ENCODE measurements at regions of chr6 and their contacts with region 1.

Region 1: DNA sequence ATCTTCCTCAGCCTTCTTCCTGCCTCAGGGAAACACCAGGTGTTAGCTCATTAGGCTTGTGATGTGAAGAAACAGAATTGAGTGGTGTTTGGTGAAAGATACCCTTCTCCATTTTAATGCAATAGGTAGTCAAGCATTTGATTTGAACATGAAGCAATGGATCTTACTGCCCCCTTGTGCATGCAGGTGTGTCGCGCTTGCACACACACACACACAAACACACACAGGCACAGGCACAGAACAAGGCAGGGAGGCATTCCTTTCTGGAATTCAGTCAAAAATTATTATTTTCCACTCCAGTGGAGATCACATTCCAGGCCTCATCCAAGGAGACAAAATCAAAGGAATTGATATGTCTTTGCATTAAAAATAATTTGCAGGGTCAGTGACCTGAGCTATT is 667.0 kb upstream of the MARCKS start:
- DNase-seq: no peak
- H3K4me3 ChIP-seq: no peak overlapping the region
- H3K4me3 Mint-ChIP-seq: no peak overlapping the region
- H3K27ac Mint-ChIP-seq: no peak overlapping the region
- H3K4me1 ChIP-seq: peaks cover 22% of the 10 kb centered on the region
- H3K4me1 Mint-ChIP-seq: peaks cover 18% of the 10 kb centered on the region
- H3K27me3 ChIP-seq: no peaks in the 10 kb centered on the region
- H3K27me3 Mint-ChIP-seq: no peaks in the 10 kb centered on the region
- CTCF ChIP-seq: no peak

Region 2: DNA sequence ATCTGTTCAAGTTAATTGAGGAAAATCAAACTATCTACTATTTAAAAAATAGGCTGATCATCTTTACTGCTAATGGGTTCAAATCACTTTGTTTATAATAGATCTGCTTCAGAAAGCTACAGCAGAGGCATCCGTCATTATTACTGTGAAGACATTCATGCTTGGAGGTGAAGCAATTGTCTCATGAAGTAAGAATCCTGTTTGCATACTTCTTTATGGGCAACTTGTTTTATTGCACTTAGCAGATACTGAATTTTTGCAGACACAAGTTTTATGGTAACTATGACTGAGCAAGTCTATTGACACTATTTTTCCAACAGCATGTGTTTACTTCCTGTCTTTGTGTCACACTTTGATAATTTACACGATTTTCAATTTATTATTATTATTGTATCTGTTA is 269.2 kb before region 1 on chr6:
- CTCF ChIA-PET with region 1: no interaction called
- POLR2A ChIA-PET with region 1: no interaction called
- intact Hi-C with region 1: no loop called
- DNase-seq: no peak
- H3K4me3 ChIP-seq: no peak overlapping the region
- H3K4me3 Mint-ChIP-seq: no peak overlapping the region
- H3K27ac Mint-ChIP-seq: no peak overlapping the region
- H3K4me1 ChIP-seq: no peaks in the 10 kb centered on the region
- H3K4me1 Mint-ChIP-seq: no peaks in the 10 kb centered on the region
- H3K27me3 ChIP-seq: no peaks in the 10 kb centered on the region
- H3K27me3 Mint-ChIP-seq: no peaks in the 10 kb centered on the region
- CTCF ChIP-seq: no peak

Region 3: DNA sequence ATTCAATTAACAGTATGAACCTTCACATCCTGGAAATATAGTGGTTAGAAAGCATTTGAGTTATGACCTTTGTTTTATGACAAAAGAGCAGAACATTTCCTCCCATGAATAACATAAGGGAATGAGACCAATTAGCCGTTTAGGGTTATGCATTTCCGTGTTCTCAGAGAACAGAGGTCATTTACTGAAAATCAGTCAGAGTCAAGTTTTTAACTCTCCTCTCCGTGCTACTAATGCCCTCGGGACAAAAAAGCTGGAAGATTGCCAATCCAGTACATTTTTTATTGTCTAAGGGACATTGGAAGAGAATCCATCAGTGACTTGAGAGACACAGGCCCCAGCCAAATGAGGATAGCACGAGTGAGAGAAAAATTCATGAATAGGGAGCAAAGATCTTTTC is 210.3 kb before region 1 on chr6:
- CTCF ChIA-PET with region 1: no interaction called
- POLR2A ChIA-PET with region 1: no interaction called
- intact Hi-C with region 1: no loop called
- DNase-seq: no peak
- H3K4me3 ChIP-seq: no peak overlapping the region
- H3K4me3 Mint-ChIP-seq: no peak overlapping the region
- H3K27ac Mint-ChIP-seq: no peak overlapping the region
- H3K4me1 ChIP-seq: no peaks in the 10 kb centered on the region; the same call in 1 of the 2 replicates
- H3K4me1 Mint-ChIP-seq: peaks cover 6% of the 10 kb centered on the region
- H3K27me3 ChIP-seq: no peaks in the 10 kb centered on the region
- H3K27me3 Mint-ChIP-seq: no peaks in the 10 kb centered on the region
- CTCF ChIP-seq: no peak

Region 4: GRCh38 chr6:113340371-113340770 is 150.2 kb after region 1 on chr6:
- CTCF ChIA-PET with region 1: no interaction called
- POLR2A ChIA-PET with region 1: interaction called, 18 read pairs
- intact Hi-C with region 1: no loop called
- DNase-seq: no peak
- H3K4me3 ChIP-seq: no peak overlapping the region
- H3K4me3 Mint-ChIP-seq: no peak overlapping the region
- H3K27ac Mint-ChIP-seq: no peak overlapping the region
- H3K4me1 ChIP-seq: no peaks in the 10 kb centered on the region
- H3K4me1 Mint-ChIP-seq: no peaks in the 10 kb centered on the region
- H3K27me3 ChIP-seq: no peaks in the 10 kb centered on the region
- H3K27me3 Mint-ChIP-seq: no peaks in the 10 kb centered on the region
- CTCF ChIP-seq: no peak

Region 5: DNA sequence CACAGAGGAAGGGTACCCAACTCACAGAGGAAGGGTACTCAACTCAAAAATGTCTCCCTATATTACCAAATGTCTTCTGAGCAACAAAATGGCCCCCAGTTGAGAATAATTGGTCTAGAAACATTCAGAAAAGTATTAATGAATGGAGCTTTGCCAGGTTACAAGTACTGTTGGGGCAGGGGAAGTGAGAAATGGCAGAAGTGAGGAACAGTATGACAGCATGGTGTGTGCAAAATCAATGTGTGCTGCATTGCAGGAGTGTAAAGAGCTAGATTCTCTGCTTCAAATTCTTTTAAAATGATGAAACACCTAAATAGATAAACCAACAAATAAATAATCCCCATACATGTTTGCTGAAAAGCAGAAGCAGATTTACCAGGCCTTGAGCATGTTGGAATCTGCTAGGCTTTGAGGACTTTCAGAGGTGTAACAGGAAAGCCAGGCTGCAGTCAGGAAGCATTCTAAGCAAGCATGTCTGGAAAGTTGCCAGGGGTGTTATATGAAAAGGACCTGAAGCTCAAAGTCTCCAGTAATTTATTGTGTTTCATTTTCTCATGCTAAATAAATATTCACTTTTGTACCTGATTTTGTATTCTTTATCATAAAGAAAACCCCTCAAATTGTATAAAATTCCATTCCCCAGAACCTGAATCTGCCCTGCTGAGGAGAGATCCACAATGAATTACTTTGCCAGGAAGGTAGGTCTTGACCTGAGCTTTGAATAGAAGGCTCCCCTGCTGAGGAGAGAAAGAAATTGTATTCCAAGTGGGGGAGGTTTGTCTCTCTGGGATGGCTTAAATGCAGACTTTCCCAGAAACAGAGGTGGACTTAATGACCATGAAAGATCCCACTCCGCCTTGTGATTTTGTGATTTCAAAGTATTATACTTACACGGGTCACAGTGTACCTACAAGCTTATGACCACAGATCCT is 402.0 kb after region 1 on chr6:
- CTCF ChIA-PET with region 1: no interaction called
- POLR2A ChIA-PET with region 1: no interaction called
- intact Hi-C with region 1: no loop called
- DNase-seq: no peak
- H3K4me3 ChIP-seq: no peak overlapping the region
- H3K4me3 Mint-ChIP-seq: no peak overlapping the region
- H3K27ac Mint-ChIP-seq: no peak overlapping the region
- H3K4me1 ChIP-seq: no peaks in the 10 kb centered on the region
- H3K4me1 Mint-ChIP-seq: no peaks in the 10 kb centered on the region
- H3K27me3 ChIP-seq: no peaks in the 10 kb centered on the region
- H3K27me3 Mint-ChIP-seq: no peaks in the 10 kb centered on the region
- CTCF ChIP-seq: no peak